Right ventricle myocardium inferior (tissue), 1 donor: ENCODE measurements at regions of chr14 and their contacts with region 1.

Region 1: GRCh38 chr14:83463500-83464098 is 1929.9 kb upstream of the SEL1L start:
- DNase-seq: no peak
- ATAC-seq: no peak

Region 2: DNA sequence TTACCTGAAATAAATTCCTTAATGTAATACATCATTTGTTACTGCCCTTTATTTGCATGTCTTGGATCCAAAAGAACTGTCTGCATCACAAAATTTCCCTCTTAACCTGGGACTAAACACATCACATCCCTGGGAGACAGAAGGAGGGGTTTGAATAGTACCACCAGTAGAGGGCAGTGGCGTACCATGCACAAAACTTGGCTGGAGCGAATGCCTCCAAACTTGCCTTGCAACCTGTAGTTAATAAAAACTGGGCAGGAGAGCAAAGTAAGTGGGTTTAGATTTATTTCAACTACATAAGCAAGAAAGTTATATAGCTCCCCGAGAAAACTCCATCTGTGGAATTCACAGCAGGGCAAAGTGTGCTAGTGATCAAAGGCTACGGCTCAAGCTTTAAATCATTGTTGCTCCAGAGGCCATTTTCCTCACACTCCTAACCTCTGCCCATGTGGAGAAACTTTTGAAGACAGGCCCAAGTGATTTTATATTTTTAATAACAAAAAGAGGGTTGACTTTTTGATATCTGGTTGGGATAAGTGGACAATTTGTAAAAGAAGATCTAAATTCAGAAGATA is 753.2 kb before region 1 on chr14:
- intact Hi-C with region 1: loop called (anchors 5 kb)
- DNase-seq: no peak
- ATAC-seq: no peak

Region 3: GRCh38 chr14:83294941-83295340 is 168.7 kb before region 1 on chr14:
- intact Hi-C with region 1: loop called (anchors 10 kb)
- DNase-seq: no peak
- ATAC-seq: no peak